Kidney (tissue), 22 donors: ENCODE measurements at regions of chr17 and their contacts with region 1.

Region 1: GRCh38 chr17:21511363-21512198 is 135.4 kb downstream of the KCNJ12 start:
- DNase-seq: peak; percentile 92 to 95 (median 93)
- H3K4me3 ChIP-seq: peak overlapping the region; percentile 39 to 61 (median 43)
- H3K27ac ChIP-seq: no peak overlapping the region
- H3K4me1 ChIP-seq: peaks cover 0 to 5% (median 0%) of the 10 kb centered on the region in 3 donors
- H3K27me3 ChIP-seq: peaks cover 2% of the 10 kb centered on the region
- CTCF ChIP-seq: peak; percentile 65

Region 2: DNA sequence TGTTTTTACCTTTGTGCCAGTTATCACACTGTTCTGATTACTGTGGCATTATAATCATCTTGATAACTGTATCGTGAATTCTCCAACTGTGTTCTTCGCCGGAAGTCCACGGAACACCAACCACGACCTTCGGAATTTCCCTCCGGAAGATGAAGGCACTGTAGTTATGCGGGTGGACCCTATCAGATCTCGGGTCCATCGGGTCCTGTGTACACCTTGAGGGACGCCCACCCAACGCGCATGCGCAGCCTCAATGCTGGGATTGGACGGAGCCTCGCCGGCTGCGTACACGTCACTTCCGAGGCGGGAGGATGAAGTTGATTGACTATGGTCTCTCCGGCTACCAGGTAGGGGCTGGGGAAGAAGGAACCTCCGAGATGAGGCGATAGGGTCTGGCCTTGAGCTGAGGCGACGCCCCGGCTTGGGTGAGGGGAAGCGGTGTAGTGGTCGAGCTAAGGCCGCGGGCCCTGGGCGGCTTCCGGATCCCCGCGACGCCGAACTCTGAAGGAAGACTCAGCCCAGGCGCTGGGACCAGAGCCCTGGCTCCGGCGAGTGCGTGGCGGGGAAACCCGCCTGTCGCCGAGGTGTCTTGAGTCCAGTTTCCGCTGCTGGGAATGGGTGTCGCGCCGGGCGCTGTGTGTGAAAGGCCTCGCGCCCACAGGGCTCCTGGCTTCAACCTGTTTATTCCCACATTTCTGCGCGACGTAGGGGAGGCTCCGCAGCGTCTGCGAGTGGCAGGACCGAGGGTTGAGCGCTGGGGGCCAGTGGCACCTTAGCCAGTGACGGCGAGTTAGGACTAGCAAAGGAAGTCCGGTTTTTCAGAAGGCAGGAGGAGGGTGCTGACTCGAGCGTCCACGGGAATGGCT is 384.7 kb before region 1 on chr17 and contains the start of gene DHRS7B:
- intact Hi-C with region 1: loop called (anchors 5 kb)
- DNase-seq: peak; percentile 98 to 99 (median 99)
- H3K4me3 ChIP-seq: peak within 1 kb of the TSS; percentile 75 to 85 (median 78)
- H3K27ac ChIP-seq: peak within 1 kb of the TSS; percentile 92 to 97
- H3K4me1 ChIP-seq: peaks cover 0 to 11% (median 10%) of the 10 kb centered on the region in 3 donors
- H3K27me3 ChIP-seq: no peaks in the 10 kb centered on the region
- CTCF ChIP-seq: peak; percentile 3
- total RNA-seq, gene DHRS7B: 19.9 TPM

Region 3: GRCh38 chr17:21457051-21458026 is 54.2 kb before region 1 on chr17:
- intact Hi-C with region 1: loop called (anchors 10 kb)
- DNase-seq: peak; percentile 93 to 96 (median 93)
- H3K4me3 ChIP-seq: no peak overlapping the region
- H3K27ac ChIP-seq: no peak overlapping the region
- H3K4me1 ChIP-seq: peaks cover 0 to 5% (median 0%) of the 10 kb centered on the region in 3 donors
- H3K27me3 ChIP-seq: no peaks in the 10 kb centered on the region
- CTCF ChIP-seq: peak; percentile 94